Activated CD4-positive, alpha-beta T cell treated with anti-CD3 and anti-CD28 coated beads for 36 hours (primary cell): ENCODE measurements at regions of chr10 and their contacts with region 1.

Region 1: DNA sequence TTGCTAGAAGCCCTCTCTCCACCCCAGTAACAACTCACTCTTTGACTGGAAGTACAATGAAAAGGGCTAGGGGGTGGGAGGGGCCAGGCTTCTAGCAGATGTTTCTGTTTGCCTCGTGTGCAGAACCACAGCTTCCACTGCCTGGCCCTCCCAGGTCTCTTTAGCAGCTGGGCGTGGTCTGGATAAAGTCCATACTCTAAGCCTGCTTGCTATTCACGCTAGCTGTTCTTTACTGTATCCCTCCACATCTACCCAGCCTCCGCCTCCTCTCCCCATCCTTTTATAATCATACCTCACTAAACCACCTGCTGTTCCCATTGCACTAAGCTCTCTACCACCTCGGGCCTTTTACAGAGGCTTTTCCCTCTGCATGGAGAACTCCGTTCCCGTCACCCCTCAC is 288.8 kb downstream of the CAMK1D start:
- DNase-seq: peak; percentile 74
- ATAC-seq: peak; percentile 49
- H3K4me3 Mint-ChIP-seq: no peak overlapping the region
- H3K27ac Mint-ChIP-seq: no peak overlapping the region
- H3K4me1 Mint-ChIP-seq: peaks cover 56% of the 10 kb centered on the region
- H3K27me3 Mint-ChIP-seq: no peaks in the 10 kb centered on the region

Region 2: GRCh38 chr10:12419262-12419847 is 218.7 kb before region 1 on chr10:
- CTCF ChIA-PET with region 1: no interaction called
- POLR2A ChIA-PET with region 1: no interaction called
- intact Hi-C with region 1: no loop called
- DNase-seq: peak; percentile 88
- ATAC-seq: peak; percentile 98
- H3K4me3 Mint-ChIP-seq: peak overlapping the region; percentile 30
- H3K27ac Mint-ChIP-seq: peak overlapping the region; percentile 73
- H3K4me1 Mint-ChIP-seq: peaks cover 36% of the 10 kb centered on the region
- H3K27me3 Mint-ChIP-seq: no peaks in the 10 kb centered on the region

Region 3: GRCh38 chr10:12594448-12594944 is 43.6 kb before region 1 on chr10:
- CTCF ChIA-PET with region 1: interaction called, 3 read pairs
- POLR2A ChIA-PET with region 1: interaction called, 4 read pairs
- intact Hi-C with region 1: loop called in 1 of 2 experiments (anchors 5 kb)
- DNase-seq: peak; percentile 66
- ATAC-seq: peak; percentile 74
- H3K4me3 Mint-ChIP-seq: peak overlapping the region; percentile 49
- H3K27ac Mint-ChIP-seq: peak overlapping the region; percentile 94
- H3K4me1 Mint-ChIP-seq: peaks cover 90% of the 10 kb centered on the region
- H3K27me3 Mint-ChIP-seq: no peaks in the 10 kb centered on the region

Region 4: GRCh38 chr10:12605580-12606405 is 32.3 kb before region 1 on chr10:
- CTCF ChIA-PET with region 1: no interaction called
- POLR2A ChIA-PET with region 1: no interaction called
- intact Hi-C with region 1: loop called in 1 of 2 experiments (anchors 1 kb)
- DNase-seq: peak; percentile 74
- ATAC-seq: peak; percentile 82
- H3K4me3 Mint-ChIP-seq: peak overlapping the region; percentile 77
- H3K27ac Mint-ChIP-seq: peak overlapping the region; percentile 99
- H3K4me1 Mint-ChIP-seq: peaks cover 28% of the 10 kb centered on the region
- H3K27me3 Mint-ChIP-seq: no peaks in the 10 kb centered on the region

Region 5: GRCh38 chr10:13158451-13158865 is 520.4 kb after region 1 on chr10:
- CTCF ChIA-PET with region 1: no interaction called
- POLR2A ChIA-PET with region 1: no interaction called
- intact Hi-C with region 1: no loop called
- DNase-seq: peak; percentile 53
- ATAC-seq: no peak
- H3K4me3 Mint-ChIP-seq: peak overlapping the region; percentile 59
- H3K27ac Mint-ChIP-seq: peak overlapping the region; percentile 37
- H3K4me1 Mint-ChIP-seq: peaks cover 17% of the 10 kb centered on the region
- H3K27me3 Mint-ChIP-seq: peaks cover 3% of the 10 kb centered on the region